ENCODE measurements at regions of chr2 and their contacts with region 1.

Region 1: DNA sequence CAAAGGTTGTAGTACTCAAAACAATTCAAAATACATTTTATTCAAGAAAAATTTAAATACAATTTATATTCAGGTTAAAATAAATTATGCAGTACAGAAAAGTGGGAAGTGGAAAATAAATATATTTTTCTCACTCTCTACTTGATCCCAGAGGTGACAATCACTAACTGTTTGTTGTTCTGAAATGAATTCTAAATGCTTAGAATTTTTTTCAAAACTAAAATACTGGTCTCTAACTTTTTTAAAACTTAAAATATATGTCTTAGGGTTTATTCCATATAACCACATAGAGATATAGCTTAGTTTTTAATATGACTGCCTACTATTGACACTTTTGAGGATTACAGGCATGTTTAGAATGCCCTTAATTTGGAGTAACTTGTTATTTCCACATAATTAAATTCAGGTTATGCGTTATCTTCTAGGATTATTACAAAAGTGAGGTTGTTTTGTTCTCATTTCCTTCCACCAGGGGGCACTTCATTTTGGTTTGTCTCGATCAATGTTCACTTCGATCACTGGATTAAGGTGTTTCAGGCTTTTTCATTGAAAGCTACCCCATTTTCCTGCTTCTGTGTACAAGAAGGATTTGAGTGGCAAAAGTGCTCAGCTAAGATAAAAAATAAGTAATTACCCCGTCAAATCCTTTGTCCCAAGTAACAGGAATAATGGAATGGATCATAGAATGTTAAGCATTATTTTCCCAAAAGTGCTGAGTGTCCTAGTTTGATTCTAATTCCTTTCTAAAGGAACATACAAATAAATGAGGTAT is 27.1 kb upstream of the TFPI start:
- H3K4me3 ChIP-seq: no peak overlapping the region
- H3K27ac ChIP-seq: no peak overlapping the region
- H3K4me1 ChIP-seq: no peaks in the 10 kb centered on the region
- CTCF ChIP-seq: peak; percentile 48; the same call in 1 of the 2 replicates

Region 2: GRCh38 chr2:187514930-187515329 is 66.4 kb before region 1 on chr2:
- CTCF ChIA-PET with region 1: interaction called, 13 read pairs
- POLR2A ChIA-PET with region 1: no interaction called
- H3K4me3 ChIP-seq: no peak overlapping the region
- H3K27ac ChIP-seq: no peak overlapping the region
- H3K4me1 ChIP-seq: no peaks in the 10 kb centered on the region
- CTCF ChIP-seq: no peak

Region 3: GRCh38 chr2:187544371-187545080 is 36.8 kb before region 1 on chr2:
- CTCF ChIA-PET with region 1: interaction called, 12 read pairs
- POLR2A ChIA-PET with region 1: no interaction called
- H3K4me3 ChIP-seq: no peak overlapping the region
- H3K27ac ChIP-seq: peak overlapping the region; percentile 75
- H3K4me1 ChIP-seq: peaks cover 23% of the 10 kb centered on the region
- CTCF ChIP-seq: no peak

Region 4: DNA sequence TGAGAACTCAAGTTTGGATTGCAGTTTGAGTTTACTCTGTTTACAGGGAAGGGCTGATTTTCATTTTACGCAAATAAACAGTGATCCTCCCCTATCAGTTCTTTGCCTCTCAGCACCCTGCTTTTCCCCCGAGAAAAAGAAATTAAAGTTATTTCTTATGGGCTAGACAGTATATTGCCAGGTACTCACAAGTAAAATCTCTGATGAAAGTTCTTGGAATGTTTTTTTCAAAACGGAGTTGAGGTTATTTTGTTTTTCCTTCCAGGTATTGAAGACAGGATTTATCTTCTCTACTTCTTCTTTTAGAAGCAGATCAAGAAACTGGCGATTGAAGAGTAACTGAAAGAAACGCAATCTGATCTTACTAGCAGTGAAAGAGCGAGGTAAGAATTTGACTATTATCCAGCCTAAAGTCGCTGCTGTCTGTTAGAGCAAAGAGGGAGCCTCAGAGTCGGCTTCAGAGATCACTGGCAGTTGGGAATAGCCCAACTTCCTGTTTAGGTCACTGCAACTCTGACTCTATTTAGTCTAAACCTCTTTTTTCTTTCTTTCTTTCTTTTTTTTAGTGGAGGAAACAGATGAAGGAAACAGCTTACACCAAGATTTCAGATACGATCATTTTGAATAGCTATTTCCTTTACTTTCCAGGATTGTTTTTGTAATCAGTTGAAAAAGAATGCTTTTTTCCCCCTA is 27.2 kb before region 1 on chr2 and contains the start of gene TFPI:
- CTCF ChIA-PET with region 1: interaction called, 12 read pairs
- POLR2A ChIA-PET with region 1: no interaction called
- H3K4me3 ChIP-seq: peak within 1 kb of the TSS; percentile 38
- H3K27ac ChIP-seq: peak within 1 kb of the TSS; percentile 35
- H3K4me1 ChIP-seq: peaks cover 5% of the 10 kb centered on the region
- CTCF ChIP-seq: no peak

Region 5: DNA sequence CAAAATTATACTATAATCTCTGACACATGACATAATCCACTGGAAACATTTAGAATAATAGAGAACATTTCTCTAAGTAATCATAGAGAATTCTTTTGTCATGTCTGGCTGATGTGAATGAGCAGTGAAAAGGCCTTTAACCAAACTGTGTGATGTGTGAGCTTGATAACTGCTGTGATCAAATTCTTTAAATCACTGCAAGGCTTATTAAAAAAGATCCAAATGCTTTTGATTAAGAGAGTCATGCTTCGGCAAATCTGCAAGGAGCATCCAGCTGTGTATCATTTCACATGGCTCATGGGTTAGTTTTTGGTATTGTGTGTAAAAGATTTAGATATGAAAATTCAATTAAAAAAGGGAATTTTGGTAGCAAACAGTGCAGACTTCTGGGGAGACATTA is 31.5 kb after region 1 on chr2:
- CTCF ChIA-PET with region 1: interaction called, 10 read pairs
- POLR2A ChIA-PET with region 1: no interaction called
- H3K4me3 ChIP-seq: no peak overlapping the region
- H3K27ac ChIP-seq: no peak overlapping the region
- H3K4me1 ChIP-seq: no peaks in the 10 kb centered on the region
- CTCF ChIP-seq: no peak

Region 6: GRCh38 chr2:187842978-187843847 is 261.9 kb after region 1 on chr2:
- CTCF ChIA-PET with region 1: interaction called, 69 read pairs
- POLR2A ChIA-PET with region 1: no interaction called
- H3K4me3 ChIP-seq: no peak overlapping the region
- H3K27ac ChIP-seq: no peak overlapping the region
- H3K4me1 ChIP-seq: no peaks in the 10 kb centered on the region
- CTCF ChIP-seq: no peak; the same call in 1 of the 2 replicates

Measured in HEK293 (cell line).